ENCODE measurements at regions of chr14 and their contacts with region 1.

Region 1: GRCh38 chr14:32627545-32628298 is 298.6 kb downstream of the AKAP6 start:
- DNase-seq: no peak

Region 2: GRCh38 chr14:32677129-32677780 is 49.5 kb after region 1 on chr14:
- intact Hi-C with region 1: loop called in 1 of 2 experiments (anchors 2 kb)
- DNase-seq: no peak

Region 3: GRCh38 chr14:32770407-32770806 is 142.7 kb after region 1 on chr14:
- intact Hi-C with region 1: no loop called
- DNase-seq: no peak

Region 4: DNA sequence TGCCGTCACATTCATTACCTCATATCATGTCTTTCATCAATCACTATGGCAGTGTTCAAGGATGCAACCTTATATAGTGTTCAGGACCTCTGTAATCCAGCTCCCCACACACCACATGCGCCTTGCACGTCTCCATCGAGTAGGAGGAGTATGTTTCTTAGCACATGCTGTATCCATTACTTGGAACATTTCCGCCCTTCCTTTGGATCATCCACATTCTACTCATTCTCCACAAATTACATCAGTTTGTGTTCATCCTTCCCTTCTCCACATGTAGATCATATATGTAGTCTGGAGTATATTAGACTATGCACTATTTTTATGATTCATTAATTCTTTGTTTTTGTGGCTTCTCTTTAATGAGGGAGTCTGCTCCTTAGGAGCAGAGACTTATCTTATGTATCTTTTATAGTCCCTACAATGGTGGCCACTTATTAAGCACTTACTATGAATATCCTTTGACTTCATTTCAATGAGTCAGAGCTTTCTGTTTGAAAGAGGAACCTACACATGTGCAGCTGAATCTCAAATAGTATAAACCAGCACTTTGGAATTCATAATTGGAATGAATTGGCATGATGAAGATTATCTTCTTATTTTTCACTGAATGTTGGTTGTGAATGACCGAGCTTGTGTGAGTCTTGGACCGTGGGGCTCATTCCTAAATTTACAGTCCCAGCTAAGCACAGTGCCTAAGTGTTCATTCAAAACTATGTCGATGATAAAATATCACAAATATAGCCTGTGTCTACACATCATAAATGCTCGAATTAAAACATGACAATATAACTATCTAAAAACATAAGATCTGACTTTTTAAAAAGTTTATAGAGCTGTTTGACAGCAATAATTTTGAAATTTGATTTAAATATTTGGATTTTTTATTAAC is 280.7 kb after region 1 on chr14:
- intact Hi-C with region 1: no loop called
- DNase-seq: no peak

Measured in posterior vena cava (tissue), 2 donors.